ENCODE measurements at regions of chrX and their contacts with region 1.

Region 1: DNA sequence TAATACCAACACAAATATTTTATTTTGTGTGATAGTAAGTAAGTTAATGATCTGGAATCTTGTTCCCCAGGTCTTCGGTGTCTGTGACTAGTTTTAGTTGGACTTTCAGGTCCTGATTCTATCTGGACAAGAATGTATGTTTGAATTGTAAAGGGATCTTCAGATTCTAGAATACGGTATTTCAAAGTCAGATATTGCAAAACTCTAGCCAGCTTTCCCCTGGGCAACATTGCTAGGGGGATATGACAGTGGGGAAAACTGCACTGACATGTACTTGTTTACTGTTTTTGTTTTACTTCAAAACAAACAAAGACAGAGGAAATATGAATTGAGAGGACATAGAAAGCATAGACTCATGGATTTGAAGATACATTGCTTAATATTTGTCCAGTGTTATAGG is 489.0 kb downstream of the FAM133A start:
- DNase-seq: no peak
- ATAC-seq: no peak
- H3K4me3 ChIP-seq: no peak overlapping the region
- H3K27ac ChIP-seq: no peak overlapping the region
- H3K4me1 ChIP-seq: no peaks in the 10 kb centered on the region
- H3K27me3 ChIP-seq: no peaks in the 10 kb centered on the region
- CTCF ChIP-seq: no peak

Region 2: DNA sequence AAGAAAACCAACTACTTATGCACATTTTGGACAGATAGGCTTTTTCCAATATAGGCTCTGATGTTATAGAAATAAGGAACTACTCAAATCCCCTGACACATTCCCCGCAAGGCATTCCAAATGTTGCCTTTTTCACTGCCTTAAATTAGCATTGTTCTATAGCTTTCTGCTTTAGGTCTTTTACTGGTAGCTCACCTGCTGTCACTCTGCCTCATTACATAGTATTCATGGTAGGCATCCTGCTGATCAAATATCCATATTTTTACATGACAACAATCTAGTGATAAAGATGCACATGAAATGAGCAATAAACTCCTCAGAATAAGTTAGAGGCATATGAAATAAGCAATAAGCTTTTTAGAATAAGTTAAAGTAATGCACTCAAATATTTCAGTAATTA is 53.8 kb after region 1 on chrX:
- intact Hi-C with region 1: loop called in 1 of 10 experiments (anchors 10 kb)
- DNase-seq: no peak
- ATAC-seq: no peak
- H3K4me3 ChIP-seq: no peak overlapping the region
- H3K27ac ChIP-seq: no peak overlapping the region
- H3K4me1 ChIP-seq: no peaks in the 10 kb centered on the region
- H3K27me3 ChIP-seq: peaks cover 0 to 4% (median 0%) of the 10 kb centered on the region in 7 donors
- CTCF ChIP-seq: no peak

Region 3: DNA sequence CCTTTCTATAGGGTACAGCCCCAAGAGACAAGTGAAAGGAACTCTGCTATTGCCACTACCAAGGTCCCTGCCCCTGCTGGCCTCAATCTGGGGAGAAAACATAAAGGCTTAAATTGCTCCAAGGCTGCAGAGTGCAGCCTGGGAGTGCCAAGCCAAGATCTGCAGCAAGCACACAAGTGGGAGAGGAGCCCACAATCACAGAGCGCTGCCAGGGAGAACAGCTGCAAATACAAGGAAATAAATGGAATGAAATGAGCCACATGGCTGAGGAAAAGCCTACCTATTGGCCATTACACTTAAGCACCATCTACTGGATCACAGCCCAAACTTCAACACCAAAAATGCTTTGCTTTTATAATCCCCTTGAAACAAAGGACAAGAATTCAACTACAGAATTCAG is 93.4 kb after region 1 on chrX:
- intact Hi-C with region 1: no loop called
- DNase-seq: no peak
- ATAC-seq: no peak
- H3K4me3 ChIP-seq: no peak overlapping the region
- H3K27ac ChIP-seq: no peak overlapping the region
- H3K4me1 ChIP-seq: no peaks in the 10 kb centered on the region
- H3K27me3 ChIP-seq: no peaks in the 10 kb centered on the region
- CTCF ChIP-seq: no peak

Region 4: GRCh38 chrX:94329182-94329581 is 166.2 kb after region 1 on chrX:
- intact Hi-C with region 1: no loop called
- DNase-seq: no peak
- ATAC-seq: no peak
- H3K4me3 ChIP-seq: peak overlapping the region in 1 of 10 donors; percentile 8
- H3K27ac ChIP-seq: no peak overlapping the region
- H3K4me1 ChIP-seq: no peaks in the 10 kb centered on the region
- H3K27me3 ChIP-seq: no peaks in the 10 kb centered on the region
- CTCF ChIP-seq: no peak

Region 5: DNA sequence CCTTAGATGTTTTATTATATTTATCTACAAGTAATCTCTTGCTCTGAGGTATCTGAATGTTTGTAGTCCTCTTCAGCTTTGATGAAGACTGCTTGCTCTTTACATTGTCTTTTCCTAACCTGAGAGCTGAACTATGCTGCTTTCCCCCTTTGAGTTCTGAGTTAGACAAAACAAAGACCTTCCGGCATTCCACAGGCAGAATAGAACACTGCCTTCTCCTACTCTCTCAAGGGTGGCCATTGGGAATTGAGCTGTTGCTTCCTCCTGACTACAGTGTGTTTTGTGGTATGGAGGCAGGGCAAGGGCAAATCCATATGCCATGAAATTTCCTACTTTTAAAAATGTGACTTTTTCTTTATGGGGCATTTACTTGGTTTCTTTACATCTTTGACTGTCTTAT is 352.0 kb after region 1 on chrX:
- intact Hi-C with region 1: no loop called
- DNase-seq: no peak
- ATAC-seq: no peak
- H3K4me3 ChIP-seq: no peak overlapping the region
- H3K27ac ChIP-seq: no peak overlapping the region
- H3K4me1 ChIP-seq: no peaks in the 10 kb centered on the region
- H3K27me3 ChIP-seq: no peaks in the 10 kb centered on the region
- CTCF ChIP-seq: no peak